AG04449 (cell line): ENCODE measurements at regions of chr3 and their contacts with region 1.

Region 1: DNA sequence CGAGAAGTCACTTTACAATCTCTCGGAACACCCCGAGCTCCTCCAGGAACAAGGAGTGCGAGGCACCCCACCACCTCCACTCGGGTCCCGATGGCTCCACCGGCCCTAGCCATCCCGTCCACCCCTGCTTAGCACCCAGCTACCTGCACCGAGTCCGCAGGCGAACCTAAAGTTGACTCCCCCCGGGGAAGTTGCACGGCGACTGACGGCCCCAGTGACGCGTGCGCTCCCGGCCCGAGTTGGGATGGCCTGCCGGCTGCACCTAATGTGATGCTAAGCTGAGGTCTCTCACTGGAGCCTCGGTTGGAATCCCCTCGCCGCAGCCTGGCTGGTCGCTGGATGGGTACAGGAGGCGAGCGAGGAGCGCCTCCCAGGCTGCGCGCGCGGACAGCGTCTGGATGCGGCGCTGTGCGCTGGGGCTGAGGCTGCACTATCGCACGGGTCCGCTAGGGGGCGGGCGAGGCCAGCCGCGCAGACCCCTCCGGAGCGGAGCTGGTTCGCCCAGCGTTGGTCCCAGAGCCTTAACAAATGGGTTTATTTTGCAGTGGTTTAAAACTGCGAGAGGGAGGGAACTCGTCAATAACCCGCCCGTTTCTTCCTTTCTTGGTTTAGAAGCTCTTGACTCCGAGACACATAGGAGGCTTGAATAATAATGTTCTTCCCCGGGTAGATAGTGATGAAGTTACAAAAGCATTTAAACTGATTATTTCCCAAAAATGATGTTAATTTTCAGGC is at the start of gene OXTR:
- DNase-seq: peak; percentile 78
- H3K4me3 ChIP-seq: peak within 1 kb of the TSS; percentile 78
- CTCF ChIP-seq: peak; percentile 100

Region 2: DNA sequence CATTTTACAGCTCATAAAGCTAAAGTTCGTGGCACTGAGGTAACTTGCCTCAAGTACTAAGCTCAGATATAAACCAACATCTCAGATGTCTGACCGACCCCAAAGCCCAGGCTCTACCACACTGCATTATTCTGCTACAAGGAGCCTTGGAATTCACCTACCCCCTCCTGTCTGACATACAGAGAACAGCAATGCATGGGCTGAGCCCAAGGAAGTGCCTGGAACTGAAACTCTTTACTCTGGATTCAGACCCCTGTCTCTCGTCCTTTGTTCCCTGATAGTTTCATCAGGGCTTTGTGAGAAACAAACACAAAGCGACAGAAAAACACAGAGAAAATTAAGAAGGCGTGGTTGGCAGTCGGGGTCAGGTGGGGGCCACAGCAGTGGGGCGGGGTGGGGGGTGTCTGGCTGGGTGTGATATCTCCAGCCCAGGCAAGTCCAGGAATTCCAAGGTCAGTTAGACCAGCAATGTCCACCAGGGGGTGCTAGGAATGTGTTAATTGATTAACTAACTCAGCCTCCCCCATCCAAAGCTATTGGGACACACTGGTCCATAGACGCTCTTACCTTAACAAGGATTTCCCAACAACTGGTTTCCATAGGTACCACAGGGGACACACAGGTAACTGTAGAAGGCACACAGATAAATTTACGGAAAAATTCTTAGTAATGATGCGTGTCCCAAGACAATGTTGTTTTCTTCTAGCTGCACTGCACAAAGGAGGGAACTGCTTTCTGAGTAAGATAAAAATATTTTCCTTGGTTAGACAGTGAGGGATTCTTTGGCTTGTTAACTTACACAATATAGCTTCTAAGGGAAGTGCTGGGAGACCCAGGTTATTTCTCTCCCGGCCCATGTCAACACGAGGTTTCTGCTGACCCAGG is 105.8 kb before region 1 on chr3:
- CTCF ChIA-PET with region 1: interaction called, 70 read pairs
- POLR2A ChIA-PET with region 1: no interaction called
- DNase-seq: no peak
- H3K4me3 ChIP-seq: no peak overlapping the region
- CTCF ChIP-seq: peak; percentile 62

Region 3: GRCh38 chr3:8851719-8852118 is 82.5 kb after region 1 on chr3:
- CTCF ChIA-PET with region 1: interaction called, 25 read pairs
- POLR2A ChIA-PET with region 1: interaction called, 20 read pairs
- DNase-seq: no peak
- H3K4me3 ChIP-seq: no peak overlapping the region
- CTCF ChIP-seq: no peak

Region 4: GRCh38 chr3:8875836-8876235 is 106.6 kb after region 1 on chr3:
- CTCF ChIA-PET with region 1: interaction called, 26 read pairs
- POLR2A ChIA-PET with region 1: no interaction called
- DNase-seq: no peak
- H3K4me3 ChIP-seq: no peak overlapping the region
- CTCF ChIP-seq: no peak

Region 5: GRCh38 chr3:8899986-8900385 is 130.7 kb after region 1 on chr3:
- CTCF ChIA-PET with region 1: interaction called, 29 read pairs
- POLR2A ChIA-PET with region 1: no interaction called
- DNase-seq: peak; percentile 49
- H3K4me3 ChIP-seq: no peak overlapping the region
- CTCF ChIP-seq: no peak

Region 6: DNA sequence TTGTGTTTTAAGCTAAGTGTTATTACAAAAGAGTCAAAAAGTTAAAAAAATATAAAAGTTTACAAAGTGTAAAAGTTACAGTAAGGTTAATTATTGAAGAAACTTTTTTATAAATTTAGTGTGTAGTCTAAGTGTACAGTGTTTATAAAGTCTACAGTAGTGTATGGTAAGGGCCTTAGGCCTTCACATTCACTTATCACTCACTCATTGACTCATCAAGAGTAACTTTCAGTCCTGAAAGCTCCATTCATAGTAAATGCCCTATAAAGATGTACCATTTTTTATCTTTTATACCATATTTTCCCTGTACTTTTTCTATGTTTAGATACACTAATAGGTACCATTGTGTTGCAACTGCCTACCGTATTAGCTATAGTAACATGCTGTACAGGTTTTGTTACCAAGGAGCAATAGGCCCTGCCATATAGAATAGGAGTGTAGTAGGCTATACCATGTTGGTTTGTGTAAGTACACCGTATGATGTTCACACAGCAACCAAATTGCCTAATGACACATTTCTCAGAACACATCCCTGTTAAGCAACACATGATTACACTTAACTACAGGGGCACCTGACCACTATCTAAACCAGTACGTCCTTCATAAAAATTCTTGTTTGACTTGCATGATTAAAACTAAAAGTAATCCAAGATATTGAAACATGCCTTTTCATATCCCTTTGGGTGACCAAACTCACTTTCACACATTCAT is 176.8 kb after region 1 on chr3:
- CTCF ChIA-PET with region 1: interaction called, 95 read pairs
- POLR2A ChIA-PET with region 1: interaction called, 3 read pairs
- DNase-seq: no peak
- H3K4me3 ChIP-seq: no peak overlapping the region
- CTCF ChIP-seq: no peak

Region 7: DNA sequence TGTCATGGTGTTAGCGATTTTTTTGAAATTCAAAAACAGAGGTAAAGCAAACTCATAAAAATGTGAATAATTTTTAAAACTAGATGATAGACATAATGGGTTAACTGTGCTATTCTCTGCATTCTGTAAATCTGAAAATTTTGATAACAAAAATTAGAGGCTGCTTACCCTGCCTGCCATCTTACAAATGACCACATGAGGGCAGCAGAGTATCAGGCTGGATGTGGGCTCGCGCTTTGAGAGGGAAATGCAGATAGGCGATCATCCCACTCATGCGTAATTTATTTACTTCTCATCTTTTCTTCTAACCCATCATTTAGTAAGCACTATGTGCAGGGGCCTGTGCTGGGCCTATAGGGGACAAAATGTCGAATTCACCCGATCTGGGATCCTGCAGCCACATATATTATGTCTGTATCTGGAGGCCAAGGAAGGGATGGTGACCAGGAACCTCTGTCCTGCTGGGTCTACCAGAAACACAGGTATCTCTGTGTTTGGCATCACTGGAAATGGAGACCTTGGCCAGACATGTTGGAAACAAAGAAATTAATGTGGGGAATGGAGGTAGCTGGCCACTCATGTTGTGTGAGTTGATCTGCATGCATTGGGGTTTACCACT is 201.8 kb after region 1 on chr3:
- CTCF ChIA-PET with region 1: interaction called, 100 read pairs
- POLR2A ChIA-PET with region 1: no interaction called
- DNase-seq: no peak
- H3K4me3 ChIP-seq: no peak overlapping the region
- CTCF ChIP-seq: peak; percentile 79